ENCODE measurements at regions of chr1 and their contacts with region 1.

Region 1: GRCh38 chr1:163528710-163529348 is 207.1 kb downstream of the NUF2 start:
- DNase-seq: peak; percentile 21
- H3K4me3 ChIP-seq: no peak overlapping the region
- H3K27ac ChIP-seq: no peak overlapping the region
- H3K4me1 ChIP-seq: no peaks in the 10 kb centered on the region; a peak in 1 of 4 replicates
- H3K27me3 ChIP-seq: no peaks in the 10 kb centered on the region
- CTCF ChIP-seq: peak; percentile 86
- EP300 ChIP-seq: no peak
- RAD21 ChIP-seq: peak; percentile 68

Region 2: DNA sequence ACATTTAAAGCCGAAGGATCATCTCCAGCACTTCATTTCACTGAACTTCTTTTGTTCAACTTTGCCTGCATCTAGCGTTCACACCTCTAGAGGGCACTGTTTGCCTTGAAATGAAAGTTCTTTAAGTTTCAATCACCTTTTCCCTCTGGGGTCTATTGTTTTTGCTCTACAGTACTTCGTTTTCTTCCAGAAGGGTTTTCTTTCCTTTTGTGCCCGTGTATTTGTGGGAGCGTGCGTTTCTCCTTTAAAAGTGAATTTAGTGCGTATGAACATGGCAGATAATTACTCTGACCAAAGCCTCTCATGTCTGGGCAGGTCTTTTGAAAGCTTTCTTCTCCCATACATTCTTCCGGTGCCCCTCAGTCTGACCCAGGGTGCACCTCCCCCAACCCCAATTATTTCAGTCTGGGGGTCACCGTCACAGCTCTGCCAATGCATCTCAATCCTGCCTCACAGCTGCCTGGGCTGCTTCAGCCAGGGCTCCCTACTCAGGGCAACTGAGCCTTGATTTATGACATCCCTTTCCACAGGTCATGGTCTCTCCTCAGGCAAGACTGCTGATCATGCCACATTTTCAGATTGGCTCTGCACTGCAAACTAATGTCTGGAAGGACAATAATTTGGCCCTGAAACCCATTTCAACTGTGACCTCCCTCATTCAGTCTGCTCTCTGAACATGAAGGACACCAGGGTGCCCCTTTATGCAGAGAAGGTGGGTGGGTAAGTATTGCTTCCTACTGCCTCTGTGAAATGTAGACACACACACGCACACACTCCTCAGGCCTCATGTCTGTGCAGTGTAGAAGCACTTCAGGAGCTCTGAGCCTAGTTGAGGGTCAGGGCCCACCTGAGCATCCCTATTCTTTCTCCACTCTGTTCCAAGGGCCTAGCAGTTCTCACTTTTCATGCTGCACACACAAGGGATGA is 118.5 kb before region 1 on chr1:
- CTCF ChIA-PET with region 1: interaction called, 13 read pairs
- POLR2A ChIA-PET with region 1: no interaction called
- DNase-seq: peak; percentile 60
- H3K4me3 ChIP-seq: no peak overlapping the region; a peak in 1 of 4 replicates
- H3K27ac ChIP-seq: no peak overlapping the region
- H3K4me1 ChIP-seq: peaks cover 0 to 13% of the 10 kb centered on the region in 2 experiments; a peak in 1 of 4 replicates
- H3K27me3 ChIP-seq: no peaks in the 10 kb centered on the region
- CTCF ChIP-seq: peak; percentile 89
- EP300 ChIP-seq: no peak
- RAD21 ChIP-seq: peak; percentile 92

Region 3: DNA sequence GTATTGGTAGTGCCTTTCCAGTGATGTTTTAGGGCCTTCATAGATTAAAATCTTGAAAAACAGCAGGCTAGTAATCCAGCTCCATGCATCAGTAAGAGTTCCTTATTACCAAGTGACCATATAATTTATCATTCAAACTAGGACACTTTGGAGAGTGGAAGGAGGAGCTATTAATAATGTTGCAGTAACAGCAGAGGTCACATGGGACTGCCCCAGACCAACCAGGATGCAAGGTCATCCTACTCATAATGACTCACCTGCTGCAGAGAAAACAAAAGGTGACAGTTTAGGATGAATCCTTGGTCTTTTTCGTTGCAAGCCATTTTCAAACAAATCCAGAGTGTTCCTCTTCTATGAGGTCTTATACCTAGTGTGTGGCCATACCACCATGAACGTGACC is 19.7 kb before region 1 on chr1:
- CTCF ChIA-PET with region 1: interaction called, 18 read pairs
- POLR2A ChIA-PET with region 1: no interaction called
- DNase-seq: no peak
- H3K4me3 ChIP-seq: no peak overlapping the region
- H3K27ac ChIP-seq: no peak overlapping the region
- H3K4me1 ChIP-seq: no peaks in the 10 kb centered on the region
- H3K27me3 ChIP-seq: no peaks in the 10 kb centered on the region
- CTCF ChIP-seq: no peak
- EP300 ChIP-seq: no peak
- RAD21 ChIP-seq: no peak